Activated CD4-positive, alpha-beta T cell treated with anti-CD3 and anti-CD28 coated beads for 36 hours (primary cell): ENCODE measurements at regions of chr15 and their contacts with region 1.

Region 1: GRCh38 chr15:60362321-60363086 is 35.3 kb downstream of the ANXA2 start:
- DNase-seq: peak; percentile 74
- ATAC-seq: peak; percentile 97
- H3K4me3 Mint-ChIP-seq: no peak overlapping the region
- H3K27ac Mint-ChIP-seq: peak overlapping the region; percentile 53
- H3K4me1 Mint-ChIP-seq: peaks cover 18% of the 10 kb centered on the region
- H3K27me3 Mint-ChIP-seq: no peaks in the 10 kb centered on the region

Region 2: GRCh38 chr15:60389261-60390077 is 27.0 kb after region 1 on chr15:
- CTCF ChIA-PET with region 1: interaction called, 8 read pairs
- POLR2A ChIA-PET with region 1: interaction called, 6 read pairs
- intact Hi-C with region 1: loop called (anchors 2 kb)
- DNase-seq: peak; percentile 59
- ATAC-seq: peak; percentile 87
- H3K4me3 Mint-ChIP-seq: peak overlapping the region; percentile 2
- H3K27ac Mint-ChIP-seq: peak overlapping the region; percentile 10
- H3K4me1 Mint-ChIP-seq: peaks cover 56% of the 10 kb centered on the region
- H3K27me3 Mint-ChIP-seq: no peaks in the 10 kb centered on the region

Region 3: DNA sequence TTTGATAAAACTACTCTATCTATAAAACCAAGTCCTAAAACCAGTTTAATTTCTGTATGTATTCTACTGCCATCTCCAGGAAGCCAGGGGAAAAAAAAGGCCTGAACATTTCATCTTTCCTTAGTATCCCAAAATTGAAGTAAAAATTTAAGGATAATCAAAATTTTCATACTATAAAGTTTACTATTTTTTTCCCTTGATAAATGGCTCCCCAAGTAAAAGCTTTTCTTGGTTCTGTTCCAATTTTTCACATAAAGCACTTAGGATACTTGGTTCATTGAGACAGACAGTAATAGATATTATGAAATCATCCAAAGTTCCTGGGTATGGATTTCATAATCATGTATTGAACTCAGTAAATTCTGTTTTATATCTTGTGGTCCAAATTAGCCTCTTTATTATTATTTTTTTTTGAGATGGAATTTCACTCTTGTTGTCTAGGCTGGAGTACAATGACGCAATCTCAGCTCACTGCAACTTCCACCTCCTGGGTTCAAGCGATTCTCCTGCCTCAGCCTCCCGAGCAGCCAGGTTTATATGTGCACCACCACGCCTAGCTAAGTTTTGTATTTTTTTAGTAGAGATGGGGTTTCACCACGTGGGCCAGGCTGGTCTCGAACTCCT is 81.9 kb after region 1 on chr15:
- CTCF ChIA-PET with region 1: interaction called, 8 read pairs
- POLR2A ChIA-PET with region 1: no interaction called
- intact Hi-C with region 1: loop called (anchors 1 to 5 kb)
- DNase-seq: no peak
- ATAC-seq: no peak
- H3K4me3 Mint-ChIP-seq: no peak overlapping the region
- H3K27ac Mint-ChIP-seq: no peak overlapping the region
- H3K4me1 Mint-ChIP-seq: no peaks in the 10 kb centered on the region
- H3K27me3 Mint-ChIP-seq: no peaks in the 10 kb centered on the region

Region 4: GRCh38 chr15:60520825-60521368 is 158.4 kb after region 1 on chr15:
- CTCF ChIA-PET with region 1: interaction called, 47 read pairs
- POLR2A ChIA-PET with region 1: interaction called, 7 read pairs
- intact Hi-C with region 1: loop called (anchors 1 kb)
- DNase-seq: peak; percentile 90
- ATAC-seq: peak; percentile 68
- H3K4me3 Mint-ChIP-seq: no peak overlapping the region
- H3K27ac Mint-ChIP-seq: peak overlapping the region; percentile 41
- H3K4me1 Mint-ChIP-seq: peaks cover 45% of the 10 kb centered on the region
- H3K27me3 Mint-ChIP-seq: no peaks in the 10 kb centered on the region

Region 5: DNA sequence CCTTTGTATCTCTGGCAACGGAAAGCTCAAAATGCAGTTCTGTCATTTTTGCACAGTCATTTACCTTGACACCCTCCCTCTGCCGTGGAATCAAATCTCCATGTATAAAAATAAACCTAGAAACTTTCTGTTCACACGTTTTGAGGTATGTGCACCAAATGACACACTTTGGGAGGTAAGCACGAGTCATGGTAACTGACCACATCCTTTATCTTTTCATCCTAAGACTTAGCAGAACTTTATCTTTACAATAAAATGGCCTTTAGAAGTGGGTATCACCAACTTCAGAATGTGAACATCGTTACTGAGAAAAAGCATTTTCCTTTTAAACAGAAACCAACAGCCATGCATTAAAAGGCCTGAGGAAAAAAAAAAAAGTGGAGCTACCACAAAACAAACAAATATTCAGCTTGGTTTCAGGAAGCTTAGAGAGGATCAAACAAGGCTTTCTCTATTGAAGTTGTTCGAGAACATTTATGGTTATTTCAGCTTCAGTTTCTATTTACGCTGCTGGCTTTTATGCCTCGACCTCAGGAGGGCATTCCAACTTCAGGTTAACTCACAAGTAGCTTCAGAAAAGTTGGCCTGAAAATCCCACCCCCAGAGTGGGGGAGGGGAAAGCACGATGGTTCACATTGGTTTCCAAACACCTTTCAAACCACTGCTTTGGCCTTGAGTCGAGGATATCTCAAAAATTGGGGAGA is 287.5 kb after region 1 on chr15:
- CTCF ChIA-PET with region 1: no interaction called
- POLR2A ChIA-PET with region 1: no interaction called
- intact Hi-C with region 1: no loop called
- DNase-seq: peak; percentile 68
- ATAC-seq: peak; percentile 89
- H3K4me3 Mint-ChIP-seq: peak overlapping the region; percentile 27
- H3K27ac Mint-ChIP-seq: peak overlapping the region; percentile 82
- H3K4me1 Mint-ChIP-seq: peaks cover 47% of the 10 kb centered on the region
- H3K27me3 Mint-ChIP-seq: no peaks in the 10 kb centered on the region

Region 6: GRCh38 chr15:61834076-61834697 is 1471.7 kb after region 1 on chr15:
- CTCF ChIA-PET with region 1: interaction called, 5 read pairs
- POLR2A ChIA-PET with region 1: no interaction called
- intact Hi-C with region 1: loop called in 1 of 2 experiments (anchors 5 kb)
- DNase-seq: peak; percentile 85
- ATAC-seq: peak; percentile 74
- H3K4me3 Mint-ChIP-seq: no peak overlapping the region
- H3K27ac Mint-ChIP-seq: no peak overlapping the region
- H3K4me1 Mint-ChIP-seq: peaks cover 2% of the 10 kb centered on the region
- H3K27me3 Mint-ChIP-seq: peaks cover 19% of the 10 kb centered on the region